ENCODE measurements at regions of chr2 and their contacts with region 1.

Region 1: GRCh38 chr2:108184419-108184818 is 55.3 kb upstream of the SULT1C3 start:
- DNase-seq: no peak
- ATAC-seq: no peak
- H3K4me3 Mint-ChIP-seq: no peak overlapping the region
- H3K27ac Mint-ChIP-seq: no peak overlapping the region
- H3K4me1 Mint-ChIP-seq: no peaks in the 10 kb centered on the region
- H3K27me3 Mint-ChIP-seq: peaks cover 1% of the 10 kb centered on the region
- CTCF ChIP-seq: no peak

Region 2: GRCh38 chr2:106638043-106638442 is 1546.4 kb before region 1 on chr2:
- CTCF ChIA-PET with region 1: no interaction called
- POLR2A ChIA-PET with region 1: no interaction called
- intact Hi-C with region 1: loop called (anchors 5 kb)
- DNase-seq: no peak
- ATAC-seq: no peak
- H3K4me3 Mint-ChIP-seq: no peak overlapping the region
- H3K27ac Mint-ChIP-seq: no peak overlapping the region
- H3K4me1 Mint-ChIP-seq: no peaks in the 10 kb centered on the region
- H3K27me3 Mint-ChIP-seq: peaks cover 3% of the 10 kb centered on the region
- CTCF ChIP-seq: no peak

Region 3: GRCh38 chr2:108271691-108272253 is 87.4 kb after region 1 on chr2:
- CTCF ChIA-PET with region 1: no interaction called
- POLR2A ChIA-PET with region 1: no interaction called
- intact Hi-C with region 1: no loop called
- DNase-seq: no peak
- ATAC-seq: no peak
- H3K4me3 Mint-ChIP-seq: no peak overlapping the region
- H3K27ac Mint-ChIP-seq: no peak overlapping the region
- H3K4me1 Mint-ChIP-seq: no peaks in the 10 kb centered on the region
- H3K27me3 Mint-ChIP-seq: peaks cover 2% of the 10 kb centered on the region
- CTCF ChIP-seq: no peak

Measured in activated B cell treated with CpG ODN at 0.5 μM for 24 hours (primary cell).